ENCODE measurements at regions of chr9 and their contacts with region 1.

Region 1: GRCh38 chr9:102101723-102102122 is 363.3 kb upstream of the GRIN3A start:
- DNase-seq: no peak
- H3K4me3 ChIP-seq: no peak overlapping the region
- H3K27ac ChIP-seq: no peak overlapping the region
- H3K4me1 ChIP-seq: no peaks in the 10 kb centered on the region
- H3K27me3 ChIP-seq: no peaks in the 10 kb centered on the region
- CTCF ChIP-seq: no peak
- EP300 ChIP-seq: no peak
- POLR2A ChIP-seq: no peak

Region 2: DNA sequence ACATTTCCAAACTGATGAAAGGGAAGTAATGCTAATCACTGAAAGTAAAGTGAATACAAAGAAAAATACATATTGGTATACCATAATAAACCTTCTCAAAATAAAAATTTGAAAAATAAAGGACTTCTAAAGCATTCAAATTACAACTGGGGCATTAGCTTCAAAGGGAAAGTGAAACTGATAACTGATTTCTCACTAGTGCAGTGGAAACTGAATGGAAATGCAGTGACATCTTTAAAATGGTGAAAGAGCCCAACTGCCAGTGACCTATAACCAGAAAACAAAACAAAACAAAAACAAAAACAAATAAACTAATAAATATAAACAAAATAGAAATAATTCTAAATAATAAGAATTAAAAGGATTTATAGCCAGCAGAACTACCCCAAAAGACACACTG is 65.8 kb before region 1 on chr9:
- intact Hi-C with region 1: loop called in 1 of 4 experiments (anchors 10 kb)
- DNase-seq: no peak
- H3K4me3 ChIP-seq: no peak overlapping the region
- H3K27ac ChIP-seq: no peak overlapping the region
- H3K4me1 ChIP-seq: no peaks in the 10 kb centered on the region
- H3K27me3 ChIP-seq: no peaks in the 10 kb centered on the region
- CTCF ChIP-seq: no peak
- EP300 ChIP-seq: no peak
- POLR2A ChIP-seq: no peak

Measured in ovary (tissue), 10 donors.